ENCODE measurements at regions of chr12 and their contacts with region 1.

Region 1: DNA sequence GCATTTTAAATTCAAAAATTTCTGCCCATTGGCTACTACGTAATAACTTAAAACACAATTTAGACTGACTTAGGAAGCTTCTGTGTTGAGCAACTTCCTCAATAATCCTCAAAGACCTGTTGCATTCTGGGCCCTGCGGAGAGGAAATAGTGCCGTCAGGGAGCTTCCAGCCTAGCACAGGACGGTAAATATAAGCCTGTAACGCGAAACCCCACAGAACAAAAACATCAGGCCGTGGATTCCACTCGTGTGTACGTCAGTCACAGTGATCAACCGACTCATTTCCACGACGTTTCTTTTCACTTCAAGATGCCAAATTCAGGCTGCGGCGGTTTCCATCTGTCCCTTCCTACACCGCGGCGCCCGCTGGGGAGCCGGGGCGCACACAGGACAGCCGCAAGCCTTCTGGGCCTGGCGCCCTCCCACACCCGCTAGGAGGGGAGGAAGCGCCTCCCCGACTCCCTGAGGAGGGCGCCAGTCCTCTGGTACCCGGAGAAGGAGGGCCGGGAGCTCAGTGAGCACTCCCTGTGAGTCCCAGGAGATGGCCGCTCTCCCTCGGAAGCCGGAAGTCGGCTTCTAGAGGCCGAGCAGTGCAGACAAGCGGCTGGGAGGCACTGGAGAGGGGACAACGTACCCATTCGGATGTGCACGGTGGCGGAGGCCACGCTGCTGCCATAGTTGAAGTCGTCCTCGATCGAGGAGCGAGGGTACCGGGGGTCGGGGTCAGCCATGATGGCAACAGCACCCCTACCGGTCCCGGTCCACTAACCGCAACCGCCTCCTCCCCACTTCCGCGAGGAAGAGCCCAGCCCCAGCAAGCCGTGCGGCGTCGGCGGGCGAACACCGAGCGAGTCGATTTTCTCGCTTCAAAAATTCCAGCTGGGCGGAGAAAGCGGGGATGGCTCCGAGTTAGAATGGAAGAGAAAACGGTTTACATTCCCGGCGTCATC is at the start of gene TMBIM4:
- DNase-seq: peak; percentile 77 to 78
- ATAC-seq: peak; percentile 93 to 95
- H3K4me3 ChIP-seq: peak within 1 kb of the TSS; percentile 82 to 98 (median 94)
- H3K27ac ChIP-seq: peak within 1 kb of the TSS; percentile 93 to 98 (median 94)
- H3K4me1 ChIP-seq: peaks cover 15 to 23% of the 10 kb centered on the region in 2 donors
- H3K27me3 ChIP-seq: no peaks in the 10 kb centered on the region
- CTCF ChIP-seq: peak; percentile 52 to 72 (median 60)
- POLR2A ChIP-seq: peak; percentile 49 to 54
- total RNA-seq, gene TMBIM4: 73.5 to 110 (median 80.9) TPM

Region 2: GRCh38 chr12:65986047-65986446 is 183.4 kb before region 1 on chr12:
- in situ Hi-C with region 1: no loop called
- intact Hi-C with region 1: no loop called
- DNase-seq: no peak
- ATAC-seq: no peak
- H3K4me3 ChIP-seq: no peak overlapping the region
- H3K27ac ChIP-seq: no peak overlapping the region
- H3K4me1 ChIP-seq: no peaks in the 10 kb centered on the region
- H3K27me3 ChIP-seq: no peaks in the 10 kb centered on the region
- CTCF ChIP-seq: no peak
- POLR2A ChIP-seq: no peak

Region 3: DNA sequence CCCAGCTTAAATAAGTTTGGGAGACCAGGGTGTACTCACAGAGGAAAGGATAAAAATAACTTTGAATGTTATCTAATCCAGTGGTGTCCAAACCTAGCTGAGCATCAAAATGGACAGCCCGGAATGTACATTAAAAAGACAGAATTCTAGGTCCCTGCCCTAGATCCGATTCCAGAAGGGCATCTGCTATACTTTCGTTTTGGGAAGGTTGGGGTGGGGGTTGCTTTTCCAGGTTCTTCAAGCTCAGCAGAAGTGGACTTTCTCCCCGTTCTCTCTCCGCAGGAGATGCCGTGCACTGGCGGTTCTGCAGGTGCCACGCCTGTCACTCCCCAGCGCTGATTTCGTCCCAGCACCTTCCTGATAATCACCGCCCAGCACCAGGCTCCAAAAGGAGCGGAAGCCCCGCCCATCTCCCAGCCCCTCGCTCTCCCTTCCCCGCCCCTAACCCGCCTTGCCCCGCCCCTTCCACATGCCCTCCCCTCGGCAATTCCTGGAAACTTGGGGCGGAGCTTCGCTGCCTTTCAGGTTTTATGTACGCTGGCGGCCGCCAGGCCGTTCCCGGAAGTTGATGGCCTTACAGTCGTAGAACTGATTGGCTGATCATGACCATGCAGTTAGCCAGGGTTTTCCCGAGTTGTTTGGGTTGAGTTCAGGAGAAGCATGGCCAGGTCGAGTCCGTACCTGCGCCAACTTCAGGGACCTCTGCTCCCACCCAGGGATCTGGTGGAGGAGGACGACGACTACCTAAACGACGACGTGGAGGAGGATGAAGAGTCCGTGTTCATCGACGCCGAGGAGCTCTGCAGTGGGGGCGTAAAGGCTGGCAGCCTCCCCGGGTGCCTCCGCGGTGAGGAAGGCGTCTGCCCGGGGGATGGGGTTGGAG is 132.7 kb after region 1 on chr12 and contains the start of gene HELB:
- in situ Hi-C with region 1: loop called in 1 of 4 experiments (anchors 25 kb)
- intact Hi-C with region 1: loop called (anchors 10 kb)
- DNase-seq: peak; percentile 93 to 95
- ATAC-seq: peak; percentile 97 to 99
- H3K4me3 ChIP-seq: peak within 1 kb of the TSS; percentile 62 to 88 (median 77)
- H3K27ac ChIP-seq: peak within 1 kb of the TSS; percentile 69 to 80 (median 74)
- H3K4me1 ChIP-seq: peaks cover 9 to 15% of the 10 kb centered on the region in 2 donors
- H3K27me3 ChIP-seq: no peaks in the 10 kb centered on the region
- CTCF ChIP-seq: no peak
- POLR2A ChIP-seq: peak in 1 of 2 donors; percentile 47
- total RNA-seq, gene HELB: 0.49 to 1.2 (median 0.82) TPM